Gastrocnemius medialis (tissue), 4 donors: ENCODE measurements at regions of chr15 and their contacts with region 1.

Region 1: GRCh38 chr15:90547540-90547939 is 17.8 kb downstream of the CRTC3 start:
- DNase-seq: no peak
- ATAC-seq: no peak
- H3K4me3 ChIP-seq: no peak overlapping the region
- H3K27ac ChIP-seq: no peak overlapping the region
- H3K4me1 ChIP-seq: peaks cover 7 to 13% of the 10 kb centered on the region in 2 donors
- H3K27me3 ChIP-seq: no peaks in the 10 kb centered on the region
- CTCF ChIP-seq: no peak
- POLR2A ChIP-seq: no peak

Region 2: DNA sequence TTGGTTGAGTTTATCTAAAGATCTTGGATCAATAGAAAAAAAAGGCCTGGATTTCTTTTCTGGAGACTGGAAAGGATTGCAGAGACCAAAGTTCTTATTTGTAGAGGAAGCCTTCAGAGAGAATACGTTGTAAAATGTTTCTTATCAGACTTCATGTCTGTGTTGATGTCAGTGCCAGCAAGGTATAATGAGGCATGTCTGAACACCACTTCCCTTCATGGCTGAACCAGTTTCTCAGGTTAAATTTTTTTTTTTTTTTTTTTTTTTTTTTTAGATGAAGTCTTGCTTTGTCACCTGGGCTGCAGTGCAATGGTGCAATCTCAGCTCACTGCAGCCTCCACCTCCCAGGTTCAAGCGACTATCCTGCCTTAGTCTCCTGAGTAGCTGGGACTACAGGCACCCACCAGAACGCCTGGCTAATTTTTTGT is 213.2 kb before region 1 on chr15:
- in situ Hi-C with region 1: no loop called
- intact Hi-C with region 1: no loop called
- DNase-seq: no peak
- ATAC-seq: no peak
- H3K4me3 ChIP-seq: no peak overlapping the region
- H3K27ac ChIP-seq: no peak overlapping the region
- H3K4me1 ChIP-seq: no peaks in the 10 kb centered on the region
- H3K27me3 ChIP-seq: no peaks in the 10 kb centered on the region
- CTCF ChIP-seq: no peak
- POLR2A ChIP-seq: no peak

Region 3: DNA sequence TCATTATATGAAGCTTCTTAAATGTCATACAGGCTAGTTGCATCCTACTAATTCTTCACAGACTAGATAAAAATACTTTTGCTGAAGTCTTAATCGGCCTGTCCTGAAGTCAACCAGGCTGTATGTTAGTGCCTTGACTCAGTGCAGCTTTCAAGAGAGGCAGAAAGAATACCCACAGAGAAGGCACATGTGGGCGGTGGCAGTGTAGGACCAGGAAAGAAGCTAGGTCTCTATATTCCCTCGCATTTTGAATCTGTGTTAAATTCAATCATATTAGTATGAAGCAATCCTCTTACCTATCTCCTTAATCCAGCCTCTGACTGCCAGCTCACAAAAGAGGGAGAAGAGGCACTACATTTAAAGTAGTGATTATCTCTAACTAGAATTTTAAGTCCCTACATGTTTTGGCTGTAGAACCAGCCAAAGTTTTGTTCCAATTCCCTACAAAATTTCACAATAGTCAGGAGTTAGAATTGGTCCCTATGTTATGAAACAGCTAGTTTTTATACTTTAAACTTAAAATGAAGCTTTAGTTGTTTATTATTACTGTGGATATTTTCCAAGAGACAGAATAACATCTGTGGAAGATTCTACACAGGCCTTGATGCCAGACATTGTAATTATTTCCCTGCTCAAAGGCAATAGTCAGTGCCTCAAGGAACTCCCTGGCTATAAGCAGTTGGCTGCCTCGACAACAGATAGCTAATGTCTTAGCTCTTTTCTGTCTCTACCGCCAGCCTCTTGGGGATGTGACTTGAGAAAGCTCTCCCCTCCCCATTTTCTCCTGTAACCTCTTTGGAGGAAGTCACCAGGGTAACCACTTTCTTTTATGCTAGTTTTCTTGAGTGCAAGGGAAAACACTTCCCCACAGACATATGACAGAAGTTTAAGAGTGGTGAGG is 14.1 kb after region 1 on chr15:
- in situ Hi-C with region 1: no loop called
- intact Hi-C with region 1: loop called (anchors 2 kb)
- DNase-seq: no peak
- ATAC-seq: peak in 1 of 2 donors; percentile 17
- H3K4me3 ChIP-seq: no peak overlapping the region
- H3K27ac ChIP-seq: peak overlapping the region; percentile 54 to 77 (median 62)
- H3K4me1 ChIP-seq: peaks cover 43 to 69% of the 10 kb centered on the region in 2 donors
- H3K27me3 ChIP-seq: no peaks in the 10 kb centered on the region
- CTCF ChIP-seq: no peak
- POLR2A ChIP-seq: no peak